HEK293 (cell line): ENCODE measurements at regions of chr22 and their contacts with region 1.

Region 1: GRCh38 chr22:25334162-25334490 is 114.7 kb downstream of the CRYBB2 start:
- H3K4me3 ChIP-seq: no peak overlapping the region
- H3K27ac ChIP-seq: no peak overlapping the region
- H3K4me1 ChIP-seq: no peaks in the 10 kb centered on the region
- CTCF ChIP-seq: 0 out of 2 replicates have a peak, but pooled peaks have one; percentile 53

Region 2: GRCh38 chr22:25202290-25202921 is 131.7 kb before region 1 on chr22:
- CTCF ChIA-PET with region 1: interaction called, 36 read pairs
- POLR2A ChIA-PET with region 1: no interaction called
- H3K4me3 ChIP-seq: no peak overlapping the region
- H3K27ac ChIP-seq: no peak overlapping the region
- H3K4me1 ChIP-seq: no peaks in the 10 kb centered on the region
- CTCF ChIP-seq: peak; percentile 64

Region 3: DNA sequence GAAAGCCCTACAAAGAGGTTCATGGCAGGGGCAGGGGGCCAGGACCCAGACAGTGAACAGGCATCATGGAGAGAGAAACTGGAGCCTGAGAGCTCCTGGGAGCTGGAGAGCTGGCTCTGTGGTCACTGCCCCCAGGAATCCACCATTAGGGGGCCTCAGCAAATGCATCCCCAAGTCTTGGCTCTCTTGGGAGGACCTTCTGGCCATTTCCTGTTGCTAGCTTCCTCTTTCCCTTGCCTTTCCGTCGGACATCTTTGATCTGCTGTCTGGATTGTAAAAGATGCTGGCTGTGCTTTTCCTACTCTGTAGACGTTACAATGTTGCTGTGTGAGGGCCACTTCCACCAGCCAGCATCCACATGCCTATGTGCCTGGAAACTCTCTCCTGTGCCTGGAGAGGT is 121.8 kb before region 1 on chr22:
- CTCF ChIA-PET with region 1: interaction called, 10 read pairs
- POLR2A ChIA-PET with region 1: no interaction called
- H3K4me3 ChIP-seq: no peak overlapping the region
- H3K27ac ChIP-seq: no peak overlapping the region
- H3K4me1 ChIP-seq: no peaks in the 10 kb centered on the region
- CTCF ChIP-seq: no peak

Region 4: DNA sequence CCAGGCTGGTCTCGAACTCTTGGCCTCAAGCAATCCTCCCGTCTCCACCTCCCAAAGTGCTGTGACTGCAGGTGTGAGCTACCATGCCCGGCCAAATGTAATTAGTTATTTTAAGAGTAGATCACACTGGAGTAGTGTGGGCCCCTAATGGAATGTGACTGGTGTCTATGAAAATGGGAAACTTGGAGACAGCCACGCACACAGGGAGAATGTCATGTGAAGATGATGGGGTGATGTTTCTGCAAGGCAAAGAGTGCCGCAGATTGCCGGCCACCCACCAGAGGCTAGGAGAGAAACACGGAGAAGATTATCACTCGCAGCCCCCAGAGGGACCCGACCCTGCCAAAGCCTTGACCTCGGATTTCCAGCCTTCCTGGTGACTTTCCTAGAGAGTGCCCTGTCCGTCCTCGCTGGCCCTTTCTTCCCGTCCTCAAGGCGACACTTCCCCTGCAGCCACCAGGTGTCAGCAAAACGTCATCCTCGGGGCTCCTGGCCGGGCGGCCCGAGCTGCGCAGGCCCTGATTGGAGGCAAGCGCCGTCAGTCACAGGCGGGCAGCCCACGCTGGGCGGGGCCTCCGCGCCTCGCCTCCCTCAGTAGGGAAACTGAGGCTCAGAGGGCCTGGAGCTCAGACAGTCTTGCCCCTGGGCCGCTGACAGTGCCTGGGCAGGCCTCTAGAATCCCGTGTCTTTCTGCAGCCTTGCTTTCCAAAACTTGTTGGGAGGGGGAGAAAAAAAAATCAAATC is 98.4 kb before region 1 on chr22:
- CTCF ChIA-PET with region 1: interaction called, 43 read pairs
- POLR2A ChIA-PET with region 1: no interaction called
- H3K4me3 ChIP-seq: peak overlapping the region; percentile 26
- H3K27ac ChIP-seq: no peak overlapping the region
- H3K4me1 ChIP-seq: no peaks in the 10 kb centered on the region
- CTCF ChIP-seq: peak; percentile 96

Region 5: DNA sequence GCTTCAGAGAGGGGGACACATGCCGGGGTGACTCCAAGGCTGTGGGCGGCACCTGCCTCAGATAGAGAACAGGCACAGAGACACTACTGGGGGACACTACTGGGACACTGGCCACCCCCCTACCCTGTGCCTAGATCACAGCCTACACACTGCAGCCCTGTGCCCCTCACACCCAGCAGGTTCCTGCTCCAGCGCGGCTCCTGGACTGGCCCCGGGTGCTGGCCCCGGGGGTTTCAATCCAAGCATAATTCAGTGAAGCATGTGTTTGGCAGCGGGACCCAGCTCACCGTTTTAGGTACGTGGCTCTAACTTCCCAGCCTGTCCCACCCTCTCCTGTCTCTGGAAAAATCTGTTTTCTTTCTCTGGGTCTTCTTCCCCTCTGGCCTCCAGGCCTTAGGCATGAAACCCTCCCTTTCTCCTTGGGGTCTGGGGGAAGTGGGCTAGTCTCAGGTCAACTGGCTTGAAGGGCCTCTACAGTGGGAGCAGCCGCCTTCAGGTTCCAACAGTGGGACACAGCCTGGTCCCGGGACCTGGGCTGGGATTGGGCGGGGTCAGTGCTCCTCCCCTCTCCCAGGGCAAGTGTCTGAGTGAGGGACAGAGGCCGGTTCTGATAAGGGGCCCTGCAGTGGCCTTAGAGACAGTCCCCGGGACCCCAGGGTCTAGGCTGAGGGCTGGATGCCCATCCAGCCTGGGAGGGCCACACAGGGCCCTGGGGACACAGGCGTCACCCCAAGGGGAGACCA is 15.9 kb before region 1 on chr22:
- CTCF ChIA-PET with region 1: interaction called, 19 read pairs
- POLR2A ChIA-PET with region 1: no interaction called
- H3K4me3 ChIP-seq: no peak overlapping the region
- H3K27ac ChIP-seq: no peak overlapping the region
- H3K4me1 ChIP-seq: no peaks in the 10 kb centered on the region
- CTCF ChIP-seq: no peak

Region 6: GRCh38 chr22:25350551-25350971 is 16.4 kb after region 1 on chr22:
- CTCF ChIA-PET with region 1: interaction called, 12 read pairs
- POLR2A ChIA-PET with region 1: no interaction called
- H3K4me3 ChIP-seq: no peak overlapping the region
- H3K27ac ChIP-seq: no peak overlapping the region
- H3K4me1 ChIP-seq: no peaks in the 10 kb centered on the region
- CTCF ChIP-seq: no peak